Caco-2 (cell line): ENCODE measurements at regions of chr5 and their contacts with region 1.

Region 1: DNA sequence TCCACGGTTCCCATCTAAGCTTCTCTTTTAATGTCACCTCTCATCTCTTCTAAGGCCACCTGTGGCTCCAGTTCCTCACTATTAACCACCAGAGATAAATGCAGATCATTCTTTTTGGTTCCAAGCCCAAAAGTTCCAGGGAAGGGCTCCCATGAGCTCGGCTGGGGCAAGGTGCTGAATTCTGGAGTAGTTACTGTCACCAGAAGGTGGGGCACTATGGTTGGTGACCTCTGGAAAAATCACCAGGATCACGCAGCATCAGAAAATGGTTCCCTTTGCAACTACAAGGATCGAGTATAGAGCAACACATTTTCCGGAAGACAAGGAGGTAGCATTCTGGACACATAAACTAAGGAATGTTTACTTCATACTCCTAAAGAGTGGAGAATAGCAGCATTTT is 528.7 kb upstream of the DAP start:
- DNase-seq: no peak
- H3K4me3 ChIP-seq: no peak overlapping the region
- H3K4me3 Mint-ChIP-seq: no peak overlapping the region
- H3K27ac Mint-ChIP-seq: no peak overlapping the region
- H3K4me1 ChIP-seq: peaks cover 7% of the 10 kb centered on the region
- H3K4me1 Mint-ChIP-seq: peaks cover 7% of the 10 kb centered on the region
- H3K27me3 ChIP-seq: no peaks in the 10 kb centered on the region
- H3K27me3 Mint-ChIP-seq: no peaks in the 10 kb centered on the region
- CTCF ChIP-seq: peak in 1 of 2 experiments; percentile 15

Region 2: DNA sequence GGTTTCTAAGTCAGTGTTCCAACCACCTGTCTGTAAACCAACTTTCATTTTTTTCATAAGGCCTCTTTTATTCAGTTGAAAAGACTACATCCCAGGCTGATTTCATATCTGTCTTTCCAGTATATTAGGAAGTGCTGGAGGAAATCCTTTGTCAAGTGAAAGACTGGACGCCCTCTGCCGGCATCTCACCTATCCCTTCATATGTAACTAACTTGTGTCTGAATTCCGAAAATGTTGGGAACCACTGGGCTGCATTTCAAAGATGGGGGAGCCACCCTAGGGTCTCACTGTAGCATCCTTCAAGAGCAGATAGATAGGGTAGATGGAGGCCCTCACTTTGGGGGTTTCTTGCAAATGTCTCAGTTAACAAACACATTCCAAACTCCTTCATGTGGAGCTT is 44.7 kb after region 1 on chr5:
- CTCF ChIA-PET with region 1: no interaction called
- POLR2A ChIA-PET with region 1: no interaction called
- intact Hi-C with region 1: loop called (anchors 5 kb)
- DNase-seq: no peak
- H3K4me3 ChIP-seq: no peak overlapping the region
- H3K4me3 Mint-ChIP-seq: no peak overlapping the region
- H3K27ac Mint-ChIP-seq: no peak overlapping the region
- H3K4me1 ChIP-seq: no peaks in the 10 kb centered on the region
- H3K4me1 Mint-ChIP-seq: no peaks in the 10 kb centered on the region
- H3K27me3 ChIP-seq: no peaks in the 10 kb centered on the region; the same call in 1 of the 2 replicates
- H3K27me3 Mint-ChIP-seq: no peaks in the 10 kb centered on the region
- CTCF ChIP-seq: peak in 1 of 2 experiments; percentile 30

Region 3: GRCh38 chr5:11429254-11429653 is 139.5 kb after region 1 on chr5:
- CTCF ChIA-PET with region 1: no interaction called
- POLR2A ChIA-PET with region 1: no interaction called
- intact Hi-C with region 1: no loop called
- DNase-seq: no peak
- H3K4me3 ChIP-seq: no peak overlapping the region
- H3K4me3 Mint-ChIP-seq: no peak overlapping the region
- H3K27ac Mint-ChIP-seq: no peak overlapping the region
- H3K4me1 ChIP-seq: no peaks in the 10 kb centered on the region
- H3K4me1 Mint-ChIP-seq: no peaks in the 10 kb centered on the region
- H3K27me3 ChIP-seq: no peaks in the 10 kb centered on the region
- H3K27me3 Mint-ChIP-seq: no peaks in the 10 kb centered on the region
- CTCF ChIP-seq: no peak